Activated CD8-positive, alpha-beta T cell treated with anti-CD3 and anti-CD28 coated beads for 36 hours (primary cell): ENCODE measurements at regions of chr6 and their contacts with region 1.

Region 1: DNA sequence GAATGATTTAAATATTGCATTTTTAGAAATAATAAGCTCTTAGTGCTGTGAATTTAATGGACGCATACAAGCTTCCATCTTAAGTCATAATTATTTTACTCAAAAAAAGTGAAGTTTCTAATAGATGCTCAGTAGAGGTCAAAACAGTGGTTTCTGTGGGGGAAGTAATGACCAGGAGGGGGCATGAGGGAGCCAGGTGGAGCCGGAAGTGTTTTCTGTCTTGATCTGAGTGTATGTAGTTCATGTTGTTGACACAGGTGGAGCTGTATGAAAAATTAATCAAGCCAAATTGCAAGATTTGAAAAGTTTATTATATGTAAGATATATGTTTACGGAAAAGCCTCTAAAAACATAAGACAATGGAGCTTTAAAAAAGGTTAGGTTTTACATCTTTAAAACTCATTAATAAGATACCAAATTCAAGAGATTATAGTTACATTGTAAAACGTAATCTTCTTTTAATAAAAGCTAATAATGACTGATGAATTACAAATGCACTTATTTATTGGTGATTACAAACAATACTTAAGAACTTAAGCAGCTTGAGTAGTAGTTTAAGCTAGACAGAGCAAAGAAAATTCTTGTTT is 68.0 kb downstream of the PLAGL1 start:
- DNase-seq: peak; percentile 75
- ATAC-seq: peak; percentile 96
- H3K4me3 Mint-ChIP-seq: no peak overlapping the region
- H3K27ac Mint-ChIP-seq: no peak overlapping the region
- H3K4me1 Mint-ChIP-seq: peaks cover 10% of the 10 kb centered on the region
- H3K27me3 Mint-ChIP-seq: no peaks in the 10 kb centered on the region
- CTCF ChIP-seq: peak; percentile 92

Region 2: GRCh38 chr6:143620447-143620846 is 319.7 kb before region 1 on chr6:
- CTCF ChIA-PET with region 1: no interaction called
- POLR2A ChIA-PET with region 1: no interaction called
- intact Hi-C with region 1: no loop called
- DNase-seq: no peak
- ATAC-seq: no peak
- H3K4me3 Mint-ChIP-seq: no peak overlapping the region
- H3K27ac Mint-ChIP-seq: no peak overlapping the region
- H3K4me1 Mint-ChIP-seq: peaks cover 22% of the 10 kb centered on the region
- H3K27me3 Mint-ChIP-seq: no peaks in the 10 kb centered on the region
- CTCF ChIP-seq: no peak

Region 3: DNA sequence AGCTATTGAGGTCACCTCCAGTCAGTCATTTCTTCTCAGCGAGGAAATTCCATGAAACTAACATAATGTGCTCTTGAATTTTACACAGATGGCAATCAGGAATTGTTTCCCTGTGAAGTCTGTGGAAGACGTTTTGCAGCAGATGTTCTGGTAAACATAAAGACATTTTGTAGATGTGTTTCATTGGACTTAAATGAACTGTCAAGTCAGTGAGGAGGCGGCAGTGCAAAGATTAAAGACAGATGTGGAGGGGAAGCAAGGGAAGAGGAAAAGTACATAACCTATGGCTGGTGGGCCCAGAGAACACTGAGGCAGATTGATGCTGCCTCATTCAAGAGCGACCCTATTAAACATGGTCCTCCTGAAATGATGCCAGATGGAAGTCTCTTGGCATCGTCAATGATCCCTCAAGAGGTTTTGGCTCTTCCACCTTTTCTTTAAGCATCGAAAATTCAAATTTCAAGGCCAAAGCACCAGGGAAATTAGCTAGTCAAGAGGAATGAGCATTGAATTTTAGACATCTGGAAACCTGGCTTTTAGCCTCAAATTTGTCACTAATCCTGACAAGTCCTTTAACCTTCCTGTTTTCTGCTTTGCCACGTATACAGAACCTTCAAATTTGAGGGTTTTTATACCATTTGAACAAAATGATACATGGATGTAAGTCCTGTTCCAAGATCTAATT is 55.7 kb before region 1 on chr6:
- CTCF ChIA-PET with region 1: interaction called, 10 read pairs
- POLR2A ChIA-PET with region 1: no interaction called
- intact Hi-C with region 1: no loop called
- DNase-seq: no peak
- ATAC-seq: no peak
- H3K4me3 Mint-ChIP-seq: no peak overlapping the region
- H3K27ac Mint-ChIP-seq: no peak overlapping the region
- H3K4me1 Mint-ChIP-seq: no peaks in the 10 kb centered on the region
- H3K27me3 Mint-ChIP-seq: no peaks in the 10 kb centered on the region
- CTCF ChIP-seq: no peak

Region 4: DNA sequence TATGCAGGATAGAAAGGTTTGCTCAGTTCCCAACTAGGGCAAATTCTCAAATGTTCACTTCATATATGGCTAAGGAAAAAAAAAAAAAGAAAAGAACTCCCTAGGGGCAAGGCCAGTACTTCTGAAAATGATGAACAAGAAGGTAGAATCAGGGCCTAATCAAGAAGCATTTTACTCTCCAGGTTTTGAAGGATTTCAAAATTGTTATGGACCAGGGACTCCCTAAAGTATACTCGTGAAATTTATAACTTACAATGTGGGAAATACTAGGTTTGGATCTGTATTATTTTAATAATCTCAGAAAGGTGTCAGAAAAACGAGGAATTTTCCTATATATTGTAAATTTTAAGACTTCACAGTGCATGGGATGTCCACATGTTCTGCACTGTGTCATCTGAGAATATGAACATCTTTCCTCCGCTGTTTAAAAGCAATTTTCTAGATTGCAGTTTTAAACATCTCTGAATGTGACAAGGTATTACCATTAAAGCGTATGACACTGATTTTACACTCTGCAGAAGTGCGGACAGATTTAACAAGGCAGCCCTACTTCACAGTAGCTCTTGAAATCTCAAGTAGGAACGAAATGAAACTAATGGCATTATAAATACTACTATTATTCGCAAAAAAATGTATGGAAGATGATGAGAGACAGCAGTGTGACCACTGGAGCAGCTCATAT is 54.0 kb after region 1 on chr6:
- CTCF ChIA-PET with region 1: interaction called, 15 read pairs
- POLR2A ChIA-PET with region 1: no interaction called
- intact Hi-C with region 1: no loop called
- DNase-seq: no peak
- ATAC-seq: no peak
- H3K4me3 Mint-ChIP-seq: no peak overlapping the region
- H3K27ac Mint-ChIP-seq: no peak overlapping the region
- H3K4me1 Mint-ChIP-seq: no peaks in the 10 kb centered on the region
- H3K27me3 Mint-ChIP-seq: peaks cover 4% of the 10 kb centered on the region
- CTCF ChIP-seq: no peak

Region 5: GRCh38 chr6:144019929-144020328 is 79.8 kb after region 1 on chr6:
- CTCF ChIA-PET with region 1: interaction called, 173 read pairs
- POLR2A ChIA-PET with region 1: no interaction called
- intact Hi-C with region 1: no loop called
- DNase-seq: no peak
- ATAC-seq: no peak
- H3K4me3 Mint-ChIP-seq: no peak overlapping the region
- H3K27ac Mint-ChIP-seq: no peak overlapping the region
- H3K4me1 Mint-ChIP-seq: no peaks in the 10 kb centered on the region
- H3K27me3 Mint-ChIP-seq: no peaks in the 10 kb centered on the region
- CTCF ChIP-seq: no peak

Region 6: DNA sequence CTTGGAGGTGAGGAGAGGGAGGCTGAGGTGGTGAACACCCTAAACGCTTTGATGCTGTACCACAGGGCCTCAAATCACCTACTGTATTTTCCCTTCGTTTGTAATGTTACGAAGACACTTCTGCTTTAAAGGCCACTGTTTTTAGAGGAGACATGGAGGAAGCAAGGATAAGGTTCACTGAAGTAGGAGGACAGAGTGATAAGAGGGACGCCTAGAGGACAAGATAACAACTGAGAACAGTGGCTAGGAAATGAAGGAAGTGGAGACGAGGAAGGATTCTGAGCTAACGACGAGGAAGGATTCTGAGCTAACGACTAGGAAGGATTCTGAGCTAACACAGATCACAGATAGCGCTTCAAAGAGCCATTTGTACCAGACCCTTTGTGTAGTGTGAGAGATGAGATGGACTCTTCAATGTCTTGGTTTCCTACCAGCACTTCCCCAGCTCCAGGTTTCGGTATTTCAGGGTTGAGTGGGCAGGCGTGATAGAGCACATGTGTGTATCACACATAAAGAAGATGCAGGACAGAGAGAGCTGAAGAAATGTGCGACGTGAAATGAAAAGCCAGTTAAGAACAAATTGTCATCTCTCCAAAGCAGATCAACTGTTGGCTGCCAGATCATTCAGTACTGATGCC is 147.8 kb after region 1 on chr6:
- CTCF ChIA-PET with region 1: interaction called, 34 read pairs
- POLR2A ChIA-PET with region 1: no interaction called
- intact Hi-C with region 1: loop called (anchors 10 kb)
- DNase-seq: no peak
- ATAC-seq: no peak
- H3K4me3 Mint-ChIP-seq: no peak overlapping the region
- H3K27ac Mint-ChIP-seq: no peak overlapping the region
- H3K4me1 Mint-ChIP-seq: peaks cover 8% of the 10 kb centered on the region
- H3K27me3 Mint-ChIP-seq: no peaks in the 10 kb centered on the region
- CTCF ChIP-seq: no peak